ENCODE measurements at regions of chr1 and their contacts with region 1.

Region 1: DNA sequence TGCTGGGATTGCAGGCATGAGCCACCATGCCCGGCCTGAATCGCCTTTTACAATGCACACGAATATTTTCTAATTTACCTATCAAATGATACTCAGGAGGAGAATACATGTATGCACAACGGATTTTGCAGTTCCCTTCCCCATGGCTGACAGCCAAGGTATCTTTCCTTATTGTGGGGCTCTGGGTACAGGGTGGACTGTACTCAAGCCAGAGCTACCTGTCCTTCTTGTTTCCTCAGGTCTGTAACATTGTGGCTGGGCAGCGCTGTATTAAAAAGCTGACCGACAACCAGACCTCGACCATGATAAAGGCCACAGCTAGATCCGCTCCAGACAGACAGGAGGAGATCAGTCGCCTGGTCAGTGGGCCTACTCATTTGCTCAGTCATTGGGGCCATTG is 18.2 kb downstream of the AGO1 start:
- DNase-seq: no peak
- H3K4me3 ChIP-seq: no peak overlapping the region
- H3K27ac ChIP-seq: no peak overlapping the region
- H3K27me3 ChIP-seq: no peaks in the 10 kb centered on the region
- CTCF ChIP-seq: no peak

Region 2: DNA sequence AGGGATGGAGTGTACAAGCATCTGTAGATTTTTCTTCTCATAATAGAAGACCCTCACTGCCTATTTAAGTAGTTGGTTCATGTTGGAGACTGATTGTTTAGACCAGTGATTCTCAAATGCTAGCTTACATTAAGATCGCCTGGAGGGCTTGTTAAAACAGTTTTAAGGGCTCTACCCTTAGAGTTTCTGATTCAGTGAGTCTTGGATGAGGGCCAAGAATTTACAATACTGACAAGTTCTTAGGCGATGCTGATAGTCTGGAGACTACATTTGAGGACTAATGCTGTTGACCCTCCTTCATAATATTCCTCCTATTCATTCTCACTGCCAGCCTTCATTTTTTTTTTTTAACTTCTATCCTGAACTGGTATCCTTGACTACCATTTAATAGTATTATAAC is 14.5 kb after region 1 on chr1:
- CTCF ChIA-PET with region 1: no interaction called
- POLR2A ChIA-PET with region 1: no interaction called
- DNase-seq: no peak
- H3K4me3 ChIP-seq: no peak overlapping the region
- H3K27ac ChIP-seq: no peak overlapping the region
- H3K27me3 ChIP-seq: no peaks in the 10 kb centered on the region
- CTCF ChIP-seq: no peak

Region 3: GRCh38 chr1:35925741-35926140 is 24.5 kb after region 1 on chr1:
- CTCF ChIA-PET with region 1: no interaction called
- POLR2A ChIA-PET with region 1: interaction called, 12 read pairs
- DNase-seq: peak; percentile 71
- H3K4me3 ChIP-seq: no peak overlapping the region
- H3K27ac ChIP-seq: no peak overlapping the region
- H3K27me3 ChIP-seq: no peaks in the 10 kb centered on the region
- CTCF ChIP-seq: no peak

Measured in AG04450 (cell line).